Adrenal gland (tissue), 19 donors: ENCODE measurements at regions of chr1 and their contacts with region 1.

Region 1: DNA sequence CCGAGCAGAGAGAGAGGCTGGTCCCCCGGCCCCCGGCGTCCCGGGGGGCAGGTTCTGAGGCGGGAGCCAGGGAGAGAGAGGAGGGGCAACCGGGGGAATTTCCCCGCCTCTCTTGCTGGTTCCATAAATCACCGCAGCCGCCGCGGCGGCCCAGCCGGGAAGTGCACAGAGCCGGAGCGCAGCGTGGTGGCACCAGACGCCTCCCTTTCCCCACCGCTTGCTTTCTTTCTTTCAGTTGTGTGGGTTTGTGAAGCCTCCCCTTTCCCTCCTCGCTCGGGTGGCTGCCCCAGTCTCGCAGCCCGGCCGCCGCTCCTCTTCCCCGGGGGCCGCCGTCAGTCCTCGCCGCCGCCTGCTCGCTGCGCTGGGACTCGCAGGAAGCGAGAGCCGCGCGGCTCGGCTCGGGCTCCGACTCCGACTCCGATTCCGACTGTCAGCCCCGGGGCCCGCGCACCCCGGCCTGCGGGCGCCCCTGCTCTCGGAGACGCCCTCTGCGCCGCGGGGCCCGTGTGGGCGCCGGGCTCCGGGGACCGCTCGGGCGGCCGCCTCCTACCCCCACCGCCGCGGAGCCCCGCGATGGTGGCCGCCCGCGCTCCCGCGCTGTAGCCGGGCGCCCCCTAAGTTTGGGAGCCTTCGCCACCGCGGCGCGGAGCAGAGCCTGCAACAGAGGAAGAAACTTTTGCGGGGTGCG is at the start of gene CACHD1:
- DNase-seq: peak; percentile 84 to 89 (median 86)
- H3K4me3 ChIP-seq: peak within 1 kb of the TSS; percentile 43 to 100 (median 64)
- H3K27ac ChIP-seq: peak within 1 kb of the TSS; percentile 30 to 88 (median 74)
- H3K4me1 ChIP-seq: peaks cover 18 to 27% of the 10 kb centered on the region in 2 donors
- H3K27me3 ChIP-seq: no peaks in the 10 kb centered on the region
- CTCF ChIP-seq: peak in 5 of 6 experiments; percentile 9 to 49 (median 42)
- POLR2A ChIP-seq: peak in 1 of 2 donors; percentile 49
- total RNA-seq, gene CACHD1: 16.2 to 43.1 (median 27.7) TPM

Region 2: GRCh38 chr1:64505232-64505943 is 35.3 kb after region 1 on chr1:
- intact Hi-C with region 1: loop called in 1 of 2 experiments (anchors 5 kb)
- DNase-seq: peak; percentile 49 to 70 (median 61)
- H3K4me3 ChIP-seq: peak overlapping the region in 2 of 4 donors; percentile 33 to 57
- H3K27ac ChIP-seq: peak overlapping the region in 4 of 5 donors; percentile 56 to 73 (median 72)
- H3K4me1 ChIP-seq: peaks cover 47 to 52% of the 10 kb centered on the region in 2 donors
- H3K27me3 ChIP-seq: no peaks in the 10 kb centered on the region
- CTCF ChIP-seq: no peak
- POLR2A ChIP-seq: peak in 1 of 2 donors; percentile 21

Region 3: GRCh38 chr1:64645741-64646140 is 175.6 kb after region 1 on chr1:
- intact Hi-C with region 1: loop called (anchors 10 kb)
- DNase-seq: no peak
- H3K4me3 ChIP-seq: no peak overlapping the region
- H3K27ac ChIP-seq: no peak overlapping the region
- H3K4me1 ChIP-seq: no peaks in the 10 kb centered on the region
- H3K27me3 ChIP-seq: no peaks in the 10 kb centered on the region
- CTCF ChIP-seq: no peak
- POLR2A ChIP-seq: no peak

Region 4: DNA sequence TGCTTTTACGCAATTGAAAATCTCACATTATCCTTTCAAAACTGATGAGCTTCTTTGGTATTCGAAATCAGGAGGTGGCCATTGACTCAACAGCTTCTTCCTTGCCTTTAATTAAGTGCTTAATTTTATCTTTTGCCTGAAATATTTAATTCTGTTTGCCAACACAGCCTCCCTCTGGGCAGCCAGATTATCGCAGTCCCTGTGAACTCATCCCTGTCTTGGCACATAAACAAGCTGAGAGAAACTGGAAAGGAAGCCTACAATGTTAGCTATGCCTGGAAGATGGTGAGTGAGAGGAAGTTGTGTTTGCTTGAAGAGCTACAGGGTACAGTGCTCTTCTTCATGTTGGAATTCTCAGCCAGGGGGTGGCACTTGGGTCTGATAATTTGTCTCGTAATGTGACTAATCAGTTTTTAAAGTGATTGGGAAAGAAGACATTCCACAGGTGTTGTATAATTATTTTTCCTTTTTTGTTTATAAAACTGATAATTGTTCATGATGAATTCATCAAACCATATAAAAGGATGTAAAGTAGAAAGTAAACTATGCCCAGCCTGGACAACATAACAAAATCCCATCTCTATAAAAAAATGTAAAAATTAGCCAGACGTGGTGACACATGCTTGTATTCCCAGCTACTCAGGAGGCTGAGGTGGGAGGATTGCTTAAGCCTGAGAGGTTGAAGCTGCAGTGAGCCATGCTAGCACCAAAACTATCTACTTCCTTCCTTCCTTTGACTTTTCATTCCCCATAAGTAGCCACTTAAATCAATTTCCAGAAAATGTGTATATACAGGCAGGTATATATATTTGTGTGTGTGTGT is 184.6 kb after region 1 on chr1:
- intact Hi-C with region 1: loop called (anchors 10 kb)
- DNase-seq: peak in 4 of 7 donors; percentile 26 to 31 (median 30)
- H3K4me3 ChIP-seq: no peak overlapping the region
- H3K27ac ChIP-seq: no peak overlapping the region
- H3K4me1 ChIP-seq: no peaks in the 10 kb centered on the region
- H3K27me3 ChIP-seq: no peaks in the 10 kb centered on the region
- CTCF ChIP-seq: peak in 5 of 6 experiments; percentile 32 to 55 (median 47)
- POLR2A ChIP-seq: no peak

Region 5: GRCh38 chr1:64675718-64676345 is 205.7 kb after region 1 on chr1:
- intact Hi-C with region 1: loop called in 1 of 2 experiments (anchors 10 kb)
- DNase-seq: no peak
- H3K4me3 ChIP-seq: no peak overlapping the region
- H3K27ac ChIP-seq: no peak overlapping the region
- H3K4me1 ChIP-seq: no peaks in the 10 kb centered on the region
- H3K27me3 ChIP-seq: no peaks in the 10 kb centered on the region
- CTCF ChIP-seq: peak; percentile 27 to 67 (median 47)
- POLR2A ChIP-seq: no peak